ENCODE measurements at regions of chr1 and their contacts with region 1.

Region 1: DNA sequence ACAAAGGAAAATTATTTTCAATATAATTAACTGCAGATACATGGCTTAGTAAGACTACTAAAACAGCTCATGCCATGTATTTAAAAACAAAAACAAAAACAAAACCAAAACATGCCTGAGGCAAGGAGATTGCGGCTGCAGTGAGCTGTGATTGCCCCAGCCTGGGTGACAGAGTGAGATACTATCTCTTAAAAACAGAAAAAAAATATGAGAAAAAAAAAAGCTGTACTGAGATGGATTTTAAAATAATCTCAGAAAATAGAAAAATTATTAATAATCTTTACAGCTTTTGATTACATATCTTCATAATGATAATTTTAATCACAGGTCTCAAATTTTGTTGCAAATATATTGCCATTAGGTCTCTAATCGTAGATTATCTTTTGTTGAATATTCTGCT is 24.0 kb upstream of the LIN9 start:
- DNase-seq: no peak
- CTCF ChIP-seq: no peak

Region 2: GRCh38 chr1:226195144-226195543 is 137.8 kb before region 1 on chr1:
- CTCF ChIA-PET with region 1: interaction called, 30 read pairs
- POLR2A ChIA-PET with region 1: no interaction called
- DNase-seq: no peak
- CTCF ChIP-seq: no peak

Region 3: GRCh38 chr1:226201029-226201593 is 131.8 kb before region 1 on chr1:
- CTCF ChIA-PET with region 1: interaction called, 30 read pairs
- POLR2A ChIA-PET with region 1: no interaction called
- DNase-seq: peak; percentile 71
- CTCF ChIP-seq: peak; percentile 61

Region 4: DNA sequence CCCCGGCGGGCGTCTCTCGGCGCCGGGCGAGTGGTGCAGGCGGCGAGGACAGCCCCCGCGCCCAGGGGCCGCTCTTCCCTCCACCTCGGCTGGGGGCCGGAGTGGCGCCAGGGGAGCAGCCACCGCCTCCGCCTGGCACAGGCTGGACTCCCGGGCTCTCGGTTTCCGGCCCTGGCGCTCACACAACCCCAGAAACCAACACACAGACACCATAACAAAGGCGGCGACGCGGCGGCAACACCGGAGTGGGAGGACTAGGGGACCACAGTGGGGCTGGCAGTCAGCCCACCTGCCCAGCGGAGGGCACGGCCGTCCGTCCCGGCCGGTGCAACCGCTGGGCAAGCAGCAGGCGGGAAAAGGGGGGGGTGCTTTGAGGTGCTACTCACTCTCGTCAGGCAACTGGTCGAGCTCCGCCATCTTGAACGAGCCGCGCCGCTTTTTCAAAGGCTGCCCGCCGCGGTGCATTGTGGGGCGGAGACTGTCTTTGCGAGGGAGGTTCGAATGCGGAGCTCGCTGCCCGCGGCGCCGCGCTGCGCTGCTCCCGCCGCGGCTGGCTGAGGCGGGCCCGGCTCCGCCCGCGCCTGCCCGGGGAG is 24.1 kb before region 1 on chr1 and contains the start of gene LIN9:
- CTCF ChIA-PET with region 1: interaction called, 19 read pairs
- POLR2A ChIA-PET with region 1: no interaction called
- DNase-seq: peak; percentile 92
- CTCF ChIP-seq: no peak

Region 5: GRCh38 chr1:226351709-226352108 is 18.8 kb after region 1 on chr1:
- CTCF ChIA-PET with region 1: interaction called, 10 read pairs
- POLR2A ChIA-PET with region 1: no interaction called
- DNase-seq: no peak
- CTCF ChIP-seq: no peak

Region 6: GRCh38 chr1:226360106-226360746 is 27.3 kb after region 1 on chr1:
- CTCF ChIA-PET with region 1: interaction called, 10 read pairs
- POLR2A ChIA-PET with region 1: no interaction called
- DNase-seq: peak; percentile 45
- CTCF ChIP-seq: no peak

Measured in GM10248 (cell line).